AG04449 (cell line): ENCODE measurements at regions of chr6 and their contacts with region 1.

Region 1: DNA sequence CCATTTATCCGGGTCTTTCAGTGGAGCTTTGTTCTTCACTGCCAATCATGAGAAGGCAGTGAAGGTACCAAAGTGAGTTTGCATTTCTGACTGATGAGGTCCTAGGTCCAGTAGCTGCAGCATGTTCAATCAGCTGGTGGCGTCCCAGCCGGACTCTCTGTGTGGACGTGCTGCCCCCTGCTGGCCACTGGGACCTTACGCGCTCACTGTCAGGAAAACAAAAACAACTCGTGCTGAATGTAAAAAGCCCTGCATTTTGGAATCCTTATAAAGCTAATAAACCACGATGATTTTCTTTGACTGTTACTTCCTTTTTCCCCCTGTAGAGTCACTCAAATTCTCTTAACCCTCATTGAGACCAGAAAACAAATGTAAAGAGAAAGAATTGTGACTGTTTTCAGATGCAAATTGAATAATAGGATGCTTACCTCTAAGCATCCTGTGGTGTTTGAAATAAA is 4.9 kb upstream of the CD24 start:
- DNase-seq: peak; percentile 14
- H3K4me3 ChIP-seq: no peak overlapping the region
- CTCF ChIP-seq: peak; percentile 98

Region 2: DNA sequence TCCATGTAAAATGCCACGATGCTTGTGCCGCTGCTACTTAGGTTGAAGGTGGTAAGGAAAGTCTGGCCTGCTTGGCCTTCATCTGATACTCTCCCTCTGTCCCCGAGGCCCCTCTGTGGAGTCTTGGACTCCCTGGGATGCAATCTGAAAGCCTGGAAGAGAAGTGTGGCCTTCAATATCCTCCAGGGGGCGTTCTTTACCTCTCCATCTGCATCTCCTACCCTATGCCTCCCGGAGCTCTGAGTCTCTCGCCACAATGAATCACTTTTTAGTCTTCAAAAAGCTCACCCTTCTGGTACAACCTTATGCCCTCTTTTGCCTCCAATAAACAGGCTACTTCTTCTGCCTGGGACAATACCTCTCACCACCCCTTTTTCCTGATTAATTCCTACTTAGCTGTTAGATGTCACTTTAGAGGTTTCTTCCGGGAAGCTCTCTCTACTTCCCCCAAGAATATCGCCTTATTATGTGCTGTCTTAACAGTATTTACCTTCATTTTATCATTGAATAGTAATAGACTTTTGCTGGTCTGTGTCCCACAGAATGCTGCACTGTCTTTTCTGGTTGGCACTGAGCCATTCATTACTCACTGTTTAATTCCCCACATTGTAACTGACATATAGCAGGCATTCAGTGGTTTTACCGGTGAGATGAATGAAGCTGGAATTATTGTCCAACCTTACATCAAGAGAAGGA is 640.0 kb before region 1 on chr6:
- CTCF ChIA-PET with region 1: interaction called, 10 read pairs
- POLR2A ChIA-PET with region 1: no interaction called
- DNase-seq: peak; percentile 24
- H3K4me3 ChIP-seq: no peak overlapping the region
- CTCF ChIP-seq: peak; percentile 81

Region 3: GRCh38 chr6:106568530-106568929 is 410.9 kb before region 1 on chr6:
- CTCF ChIA-PET with region 1: interaction called, 58 read pairs
- POLR2A ChIA-PET with region 1: no interaction called
- DNase-seq: no peak
- H3K4me3 ChIP-seq: no peak overlapping the region
- CTCF ChIP-seq: no peak

Region 4: GRCh38 chr6:106574741-106575458 is 404.6 kb before region 1 on chr6:
- CTCF ChIA-PET with region 1: interaction called, 45 read pairs
- POLR2A ChIA-PET with region 1: no interaction called
- DNase-seq: no peak
- H3K4me3 ChIP-seq: no peak overlapping the region
- CTCF ChIP-seq: no peak

Region 5: GRCh38 chr6:106608062-106608668 is 371.3 kb before region 1 on chr6:
- CTCF ChIA-PET with region 1: interaction called, 57 read pairs
- POLR2A ChIA-PET with region 1: no interaction called
- DNase-seq: no peak
- H3K4me3 ChIP-seq: no peak overlapping the region
- CTCF ChIP-seq: peak; percentile 58

Region 6: DNA sequence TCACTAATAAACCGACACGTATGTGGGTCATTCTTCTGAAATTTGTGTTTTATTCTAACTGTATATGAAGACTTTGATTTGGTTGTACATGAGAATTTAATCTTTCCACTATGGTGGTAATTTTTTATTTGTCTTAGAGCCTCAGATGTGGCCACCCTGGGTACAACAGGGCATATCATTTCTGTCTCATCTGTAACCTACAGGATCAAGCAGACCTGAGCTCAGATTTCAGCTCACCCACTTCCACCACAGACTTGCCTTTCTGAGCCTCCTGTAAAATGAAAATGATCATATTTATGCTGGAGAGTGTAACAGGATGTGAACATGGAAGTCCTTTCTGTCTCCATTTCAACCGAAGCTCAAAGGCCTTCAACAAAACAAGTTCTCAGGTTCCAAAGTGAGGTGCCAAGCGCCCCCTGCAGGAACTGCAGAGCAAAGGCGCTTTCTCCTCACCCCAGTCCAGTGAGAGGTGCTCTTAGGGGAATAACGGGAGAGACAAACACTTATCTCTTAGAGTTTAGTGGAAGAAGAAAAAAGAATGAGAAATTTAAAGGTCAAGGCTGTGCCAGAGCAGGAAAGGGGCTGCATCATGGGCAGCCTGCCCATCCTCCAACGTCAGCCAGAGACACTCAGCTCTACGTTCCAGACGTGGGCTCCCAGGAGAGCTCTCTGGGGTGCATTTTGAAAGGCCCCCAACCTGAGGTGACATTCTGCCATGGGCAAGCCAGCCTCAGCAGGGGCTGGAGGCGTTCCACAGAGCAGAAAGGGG is 18.1 kb after region 1 on chr6:
- CTCF ChIA-PET with region 1: interaction called, 25 read pairs
- POLR2A ChIA-PET with region 1: no interaction called
- DNase-seq: peak; percentile 7
- H3K4me3 ChIP-seq: no peak overlapping the region
- CTCF ChIP-seq: peak; percentile 73